Common myeloid progenitor, CD34-positive (primary cell): ENCODE measurements at regions of chr20 and their contacts with region 1.

Region 1: DNA sequence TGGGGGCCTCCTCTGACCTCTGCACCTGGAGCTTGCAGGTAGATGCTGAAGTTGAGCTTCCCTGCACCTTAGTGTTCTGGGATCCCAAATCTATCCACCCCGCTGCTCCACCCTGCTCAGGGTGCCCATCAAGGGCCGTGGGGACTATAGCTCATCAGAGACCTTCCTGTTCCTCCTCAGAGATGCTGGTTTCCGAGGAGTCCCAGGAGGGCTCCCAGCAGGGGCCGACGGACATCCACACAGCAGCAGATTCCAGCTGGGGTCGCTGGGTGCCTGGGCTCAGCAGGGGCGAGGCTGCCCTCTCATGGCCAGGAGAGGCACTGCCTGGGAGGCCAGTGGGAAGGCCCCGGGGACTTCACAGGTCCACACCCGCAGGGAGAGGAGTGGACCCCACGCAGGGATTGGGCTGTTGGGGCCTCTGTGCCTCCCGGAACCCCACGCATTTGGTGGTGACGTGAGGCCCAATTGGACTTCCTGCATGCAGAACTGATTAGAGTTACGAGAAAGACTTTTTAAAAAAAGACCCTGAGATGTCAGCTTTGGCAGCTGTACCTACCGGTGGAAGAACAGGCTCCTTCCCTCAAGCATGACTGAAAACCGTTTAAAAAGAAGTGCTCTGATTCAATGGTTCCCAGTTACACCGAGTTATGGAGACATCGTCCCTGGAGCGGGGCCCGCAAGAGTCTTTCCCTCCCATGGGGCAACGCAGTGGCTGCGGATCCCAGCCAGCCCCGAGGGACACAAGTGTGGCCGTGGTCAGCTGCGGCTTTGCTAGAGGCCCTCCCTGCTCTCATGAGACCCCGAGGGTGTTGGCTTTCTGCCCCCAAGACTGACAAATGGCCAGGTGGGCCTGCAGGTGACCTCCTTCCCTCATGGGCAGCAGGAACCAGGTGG is 25.3 kb upstream of the SLCO4A1 start:
- DNase-seq: peak; percentile 76 to 78 (median 77)
- H3K4me3 ChIP-seq: peak overlapping the region in 2 of 7 experiments; percentile 7 to 26
- H3K27ac ChIP-seq: peak overlapping the region in 1 of 2 experiments; percentile 82
- H3K4me1 ChIP-seq: peaks cover 0 to 56% (median 45%) of the 10 kb centered on the region in 4 experiments
- H3K27me3 ChIP-seq: no peaks in the 10 kb centered on the region

Region 2: GRCh38 chr20:62506087-62506486 is 110.9 kb before region 1 on chr20:
- CTCF ChIA-PET with region 1: interaction called, 19 read pairs
- POLR2A ChIA-PET with region 1: interaction called, 4 read pairs
- DNase-seq: no peak
- H3K4me3 ChIP-seq: no peak overlapping the region
- H3K27ac ChIP-seq: no peak overlapping the region
- H3K4me1 ChIP-seq: peaks cover 0 to 14% (median 8%) of the 10 kb centered on the region in 4 experiments
- H3K27me3 ChIP-seq: peaks cover 0 to 2% (median 0%) of the 10 kb centered on the region in 5 experiments

Region 3: GRCh38 chr20:62595491-62595890 is 21.5 kb before region 1 on chr20:
- CTCF ChIA-PET with region 1: interaction called, 12 read pairs
- POLR2A ChIA-PET with region 1: no interaction called
- DNase-seq: peak in 2 of 3 donors; percentile 40 to 44
- H3K4me3 ChIP-seq: no peak overlapping the region
- H3K27ac ChIP-seq: no peak overlapping the region
- H3K4me1 ChIP-seq: peaks cover 0 to 19% (median 16%) of the 10 kb centered on the region in 4 experiments
- H3K27me3 ChIP-seq: peaks cover 0 to 4% (median 0%) of the 10 kb centered on the region in 5 experiments

Region 4: DNA sequence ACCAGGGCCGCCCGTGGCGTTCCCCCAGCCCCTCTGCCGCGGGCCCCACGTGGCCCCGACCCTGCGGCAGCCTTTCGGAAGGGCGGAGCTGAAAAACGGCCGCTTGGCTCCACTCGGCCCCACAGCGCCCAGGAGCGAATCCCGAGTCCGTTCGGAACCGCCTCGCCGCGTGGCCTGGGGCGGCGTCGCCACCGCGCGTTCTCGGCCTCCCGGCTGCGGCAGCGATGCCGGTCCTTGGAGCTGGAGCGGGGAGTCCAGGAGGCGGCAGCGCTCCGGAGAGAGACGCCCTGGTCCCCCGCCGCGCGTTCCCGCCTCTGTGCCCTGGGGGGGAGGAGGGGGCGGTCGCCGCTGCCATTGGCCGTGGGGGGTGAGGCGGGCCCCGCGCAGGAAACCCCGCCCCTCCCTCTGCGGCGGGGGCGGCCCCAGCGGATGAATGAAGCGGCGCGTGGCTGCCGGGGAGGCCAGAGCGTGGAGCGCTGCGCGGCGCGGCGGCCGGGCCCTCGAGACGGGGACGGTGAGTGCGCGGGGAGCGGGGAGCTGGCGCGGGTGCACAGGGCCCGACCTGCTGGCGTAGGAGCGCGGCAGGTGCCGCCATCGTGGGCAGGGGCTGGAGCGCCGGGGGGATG is 25.2 kb after region 1 on chr20 and contains the start of gene SLCO4A1:
- CTCF ChIA-PET with region 1: interaction called, 28 read pairs
- POLR2A ChIA-PET with region 1: interaction called, 31 read pairs
- DNase-seq: peak; percentile 72 to 88 (median 84)
- H3K4me3 ChIP-seq: peak within 1 kb of the TSS; percentile 54 to 82 (median 67)
- H3K27ac ChIP-seq: peak within 1 kb of the TSS in 1 of 2 experiments; percentile 51
- H3K4me1 ChIP-seq: peaks cover 0 to 63% (median 58%) of the 10 kb centered on the region in 4 experiments
- H3K27me3 ChIP-seq: no peaks in the 10 kb centered on the region